K562 (cell line): ENCODE measurements at regions of chr11 and their contacts with region 1.

Region 1: GRCh38 chr11:75399344-75400145 is at the start of gene RPS3:
- DNase-seq: peak; percentile 83 to 95 (median 88)
- ATAC-seq: peak; percentile 91
- H3K4me3 ChIP-seq: peak within 1 kb of the TSS; percentile 91
- H3K27ac ChIP-seq: peak within 1 kb of the TSS; percentile 96
- H3K4me1 ChIP-seq: peaks cover 14 to 31% of the 10 kb centered on the region in 2 experiments; a peak in 3 of 5 replicates
- H3K27me3 ChIP-seq: no peaks in the 10 kb centered on the region
- CTCF ChIP-seq: no peak
- EP300 ChIP-seq: no peak
- POLR2A ChIP-seq: peak; percentile 99
- RAD21 ChIP-seq: no peak
- polyA plus RNA-seq, gene RPS3: 5,693 to 5,771 TPM

Region 2: DNA sequence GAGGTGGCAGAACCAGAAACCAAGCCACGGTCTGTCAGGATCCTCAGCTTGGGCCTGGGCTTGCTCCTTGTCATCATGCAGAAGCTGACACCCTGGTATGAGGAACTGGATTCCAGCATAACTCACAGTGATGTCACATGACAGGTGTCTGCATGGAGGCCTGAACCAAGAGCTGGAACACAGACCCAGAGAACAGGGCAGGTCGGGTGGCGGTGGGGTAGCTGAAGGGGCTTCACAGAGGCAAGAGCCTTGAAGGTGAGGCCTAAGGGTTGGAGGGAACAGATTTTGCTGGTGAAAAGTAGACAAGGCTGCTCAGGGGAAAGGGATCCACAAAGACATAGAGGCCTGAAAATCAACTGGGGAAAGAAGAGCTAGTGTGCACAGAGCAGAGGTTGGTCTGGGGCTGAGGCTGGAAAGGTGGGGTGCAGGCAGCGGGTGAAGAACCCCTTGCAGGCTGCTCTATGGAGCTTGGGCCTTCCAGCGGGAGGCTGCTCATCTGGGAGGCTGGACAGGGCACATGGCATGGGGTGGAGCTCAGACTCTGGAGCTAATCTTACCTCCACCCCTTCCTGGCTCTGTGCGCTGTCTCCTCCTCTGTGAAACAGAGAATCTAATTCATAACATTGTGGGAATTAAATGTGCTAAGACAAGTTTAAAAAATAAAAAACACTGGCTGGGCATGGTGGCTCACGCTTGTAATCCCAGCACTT is 18.7 kb before region 1 on chr11:
- CTCF ChIA-PET with region 1: no interaction called
- POLR2A ChIA-PET with region 1: interaction called, 14 read pairs
- in situ Hi-C with region 1: no loop called
- intact Hi-C with region 1: no loop called
- DNase-seq: no peak
- ATAC-seq: no peak
- H3K4me3 ChIP-seq: no peak overlapping the region
- H3K27ac ChIP-seq: no peak overlapping the region
- H3K4me1 ChIP-seq: peaks cover 12 to 21% of the 10 kb centered on the region in 2 experiments; a peak in 4 of 5 replicates
- H3K27me3 ChIP-seq: no peaks in the 10 kb centered on the region
- CTCF ChIP-seq: no peak
- EP300 ChIP-seq: no peak
- POLR2A ChIP-seq: no peak
- RAD21 ChIP-seq: no peak

Region 3: GRCh38 chr11:75413864-75414263 is 14.3 kb after region 1 on chr11:
- CTCF ChIA-PET with region 1: no interaction called
- POLR2A ChIA-PET with region 1: interaction called, 52 read pairs
- in situ Hi-C with region 1: no loop called
- intact Hi-C with region 1: no loop called
- DNase-seq: no peak
- ATAC-seq: no peak
- H3K4me3 ChIP-seq: no peak overlapping the region
- H3K27ac ChIP-seq: no peak overlapping the region
- H3K4me1 ChIP-seq: peaks cover 0 to 3% of the 10 kb centered on the region in 2 experiments; a peak in 1 of 5 replicates
- H3K27me3 ChIP-seq: no peaks in the 10 kb centered on the region
- CTCF ChIP-seq: no peak
- EP300 ChIP-seq: no peak
- POLR2A ChIP-seq: no peak
- RAD21 ChIP-seq: no peak

Region 4: GRCh38 chr11:75422253-75423231 is 23.0 kb after region 1 on chr11:
- CTCF ChIA-PET with region 1: no interaction called
- POLR2A ChIA-PET with region 1: interaction called, 52 read pairs
- in situ Hi-C with region 1: no loop called
- intact Hi-C with region 1: no loop called
- DNase-seq: peak; percentile 62 to 76 (median 69)
- ATAC-seq: peak; percentile 63
- H3K4me3 ChIP-seq: no peak overlapping the region
- H3K27ac ChIP-seq: no peak overlapping the region
- H3K4me1 ChIP-seq: peaks cover 28 to 36% of the 10 kb centered on the region in 2 experiments; a peak in 4 of 5 replicates
- H3K27me3 ChIP-seq: no peaks in the 10 kb centered on the region
- CTCF ChIP-seq: no peak
- EP300 ChIP-seq: peak; percentile 60; the same call in 1 of the 2 replicates
- POLR2A ChIP-seq: no peak
- RAD21 ChIP-seq: no peak